K562 (cell line): ENCODE measurements at regions of chr12 and their contacts with region 1.

Region 1: GRCh38 chr12:55073043-55074022 is 52.9 kb upstream of the OR9K2 start:
- DNase-seq: peak; percentile 64 to 79 (median 66)
- ATAC-seq: peak; percentile 85
- H3K4me3 ChIP-seq: no peak overlapping the region
- H3K27ac ChIP-seq: no peak overlapping the region
- H3K4me1 ChIP-seq: no peaks in the 10 kb centered on the region
- H3K27me3 ChIP-seq: no peaks in the 10 kb centered on the region; a peak in 1 of 5 replicates
- CTCF ChIP-seq: peak; percentile 80 to 92 (median 81)
- EP300 ChIP-seq: no peak
- POLR2A ChIP-seq: no peak
- RAD21 ChIP-seq: peak; percentile 92 to 95

Region 2: GRCh38 chr12:54701940-54702592 is 371.3 kb before region 1 on chr12:
- CTCF ChIA-PET with region 1: interaction called, 15 read pairs
- POLR2A ChIA-PET with region 1: interaction called, 3 read pairs
- in situ Hi-C with region 1: no loop called
- intact Hi-C with region 1: loop called (anchors 5 kb)
- DNase-seq: peak; percentile 26 to 66 (median 35)
- ATAC-seq: peak; percentile 76
- H3K4me3 ChIP-seq: no peak overlapping the region
- H3K27ac ChIP-seq: no peak overlapping the region
- H3K4me1 ChIP-seq: no peaks in the 10 kb centered on the region
- H3K27me3 ChIP-seq: no peaks in the 10 kb centered on the region; a peak in 1 of 5 replicates
- CTCF ChIP-seq: peak; percentile 46 to 74 (median 61); a peak in 5 of 6 replicates
- EP300 ChIP-seq: no peak
- POLR2A ChIP-seq: no peak
- RAD21 ChIP-seq: peak; percentile 75

Region 3: GRCh38 chr12:54759751-54760150 is 313.6 kb before region 1 on chr12:
- CTCF ChIA-PET with region 1: interaction called, 5 read pairs
- POLR2A ChIA-PET with region 1: no interaction called
- in situ Hi-C with region 1: no loop called
- intact Hi-C with region 1: loop called (anchors 2 kb)
- DNase-seq: peak in 2 of 4 experiments; percentile 17 to 53
- ATAC-seq: peak; percentile 86
- H3K4me3 ChIP-seq: no peak overlapping the region
- H3K27ac ChIP-seq: no peak overlapping the region
- H3K4me1 ChIP-seq: no peaks in the 10 kb centered on the region
- H3K27me3 ChIP-seq: no peaks in the 10 kb centered on the region
- CTCF ChIP-seq: peak; percentile 59 to 75 (median 75); a peak in 5 of 6 replicates
- EP300 ChIP-seq: no peak
- POLR2A ChIP-seq: no peak
- RAD21 ChIP-seq: peak; percentile 81 to 85

Region 4: DNA sequence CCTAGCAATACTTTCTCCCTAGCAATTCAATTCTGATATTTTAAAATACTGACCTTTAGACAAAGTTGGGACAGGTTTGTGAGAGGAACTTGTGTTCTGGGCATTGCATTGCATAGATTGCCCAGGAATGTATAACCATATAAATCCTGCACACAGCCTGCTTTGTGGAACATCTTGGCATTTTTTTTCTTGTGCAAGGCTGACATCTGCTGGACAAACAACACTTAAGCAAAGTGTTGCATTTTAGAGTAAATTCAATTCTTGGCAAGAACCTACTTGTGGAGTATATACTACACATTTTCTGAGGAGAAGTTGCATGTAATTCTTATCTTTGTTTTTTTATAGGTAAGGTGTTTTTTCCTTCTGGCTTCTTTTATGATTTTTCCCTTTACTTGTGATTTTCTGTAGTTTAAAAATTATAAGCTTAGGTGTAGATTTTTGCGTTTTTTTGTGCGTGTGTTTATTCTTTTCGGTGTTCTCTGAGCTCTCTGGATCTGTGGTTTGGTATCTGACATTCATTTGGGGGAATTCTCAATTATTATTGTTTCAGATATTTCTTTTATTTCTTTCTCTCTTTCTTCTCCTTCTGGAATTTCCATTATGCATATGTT is 115.2 kb before region 1 on chr12:
- CTCF ChIA-PET with region 1: interaction called, 4 read pairs
- POLR2A ChIA-PET with region 1: no interaction called
- in situ Hi-C with region 1: no loop called
- intact Hi-C with region 1: loop called (anchors 1 kb)
- DNase-seq: peak; percentile 29 to 72 (median 44)
- ATAC-seq: peak; percentile 87
- H3K4me3 ChIP-seq: no peak overlapping the region
- H3K27ac ChIP-seq: no peak overlapping the region
- H3K4me1 ChIP-seq: 0 out of 5 replicates have a peak, but pooled peaks cover 0 to 2% of the 10 kb centered on the region in 2 experiments
- H3K27me3 ChIP-seq: no peaks in the 10 kb centered on the region
- CTCF ChIP-seq: peak; percentile 64 to 90 (median 71)
- EP300 ChIP-seq: no peak
- POLR2A ChIP-seq: no peak
- RAD21 ChIP-seq: peak; percentile 94 to 97

Region 5: DNA sequence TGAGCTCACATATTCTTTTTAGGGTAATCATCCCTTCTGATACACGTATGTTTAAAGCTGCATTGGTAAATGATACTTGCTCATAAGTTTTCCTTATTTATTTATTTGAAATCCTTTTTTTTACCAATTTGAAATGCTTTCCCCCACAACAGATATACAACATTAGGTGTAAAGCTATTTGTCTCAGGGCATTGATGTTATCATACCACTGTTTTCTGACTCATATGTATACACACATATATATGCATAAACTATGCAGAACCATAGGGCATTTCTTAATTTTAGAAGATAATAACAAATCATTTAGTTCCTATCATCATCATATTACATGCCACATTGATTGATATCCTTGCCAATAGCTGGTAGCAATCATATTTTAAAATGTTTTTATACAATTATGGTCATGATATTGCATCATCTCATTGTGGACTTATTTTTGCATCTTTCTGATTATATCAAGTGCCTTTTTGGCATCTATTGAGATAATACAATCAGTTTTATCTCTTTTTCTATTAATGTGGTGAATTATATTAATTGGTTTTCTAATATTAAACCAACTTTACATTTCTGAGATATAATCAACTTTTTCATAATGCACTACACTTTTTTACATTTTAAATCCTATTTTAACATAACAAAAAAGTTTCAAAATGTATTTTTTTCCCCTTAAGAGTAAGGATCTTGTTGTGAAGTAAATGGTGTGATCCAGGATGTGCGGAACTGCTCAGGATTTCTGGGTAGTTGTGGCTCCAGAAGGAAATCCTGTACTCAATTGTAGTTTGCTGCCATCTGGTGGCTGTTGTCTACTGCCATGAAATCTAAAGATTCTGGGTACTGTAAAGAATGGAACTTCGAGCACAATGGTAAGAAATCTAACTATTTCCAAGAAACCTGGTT is 69.6 kb after region 1 on chr12:
- CTCF ChIA-PET with region 1: interaction called, 4 read pairs
- POLR2A ChIA-PET with region 1: no interaction called
- in situ Hi-C with region 1: no loop called
- intact Hi-C with region 1: loop called (anchors 1 kb)
- DNase-seq: peak; percentile 39 to 72 (median 56)
- ATAC-seq: peak; percentile 87
- H3K4me3 ChIP-seq: no peak overlapping the region
- H3K27ac ChIP-seq: no peak overlapping the region
- H3K4me1 ChIP-seq: no peaks in the 10 kb centered on the region
- H3K27me3 ChIP-seq: no peaks in the 10 kb centered on the region; a peak in 1 of 5 replicates
- CTCF ChIP-seq: peak; percentile 68 to 81 (median 74)
- EP300 ChIP-seq: no peak
- POLR2A ChIP-seq: no peak
- RAD21 ChIP-seq: peak; percentile 73 to 78